ENCODE measurements at regions of chr1 and their contacts with region 1.

Region 1: GRCh38 chr1:26233903-26234643 is at the start of gene CEP85:
- DNase-seq: peak; percentile 97 to 100 (median 99)
- H3K4me3 ChIP-seq: peak within 1 kb of the TSS; percentile 60 to 100 (median 88)
- H3K27ac ChIP-seq: peak within 1 kb of the TSS; percentile 46 to 99 (median 89)
- H3K27me3 ChIP-seq: no peaks in the 10 kb centered on the region
- CTCF ChIP-seq: peak; percentile 48 to 93 (median 84)
- total RNA-seq, gene CEP85: 11.3 to 55.4 (median 22.9) TPM

Region 2: DNA sequence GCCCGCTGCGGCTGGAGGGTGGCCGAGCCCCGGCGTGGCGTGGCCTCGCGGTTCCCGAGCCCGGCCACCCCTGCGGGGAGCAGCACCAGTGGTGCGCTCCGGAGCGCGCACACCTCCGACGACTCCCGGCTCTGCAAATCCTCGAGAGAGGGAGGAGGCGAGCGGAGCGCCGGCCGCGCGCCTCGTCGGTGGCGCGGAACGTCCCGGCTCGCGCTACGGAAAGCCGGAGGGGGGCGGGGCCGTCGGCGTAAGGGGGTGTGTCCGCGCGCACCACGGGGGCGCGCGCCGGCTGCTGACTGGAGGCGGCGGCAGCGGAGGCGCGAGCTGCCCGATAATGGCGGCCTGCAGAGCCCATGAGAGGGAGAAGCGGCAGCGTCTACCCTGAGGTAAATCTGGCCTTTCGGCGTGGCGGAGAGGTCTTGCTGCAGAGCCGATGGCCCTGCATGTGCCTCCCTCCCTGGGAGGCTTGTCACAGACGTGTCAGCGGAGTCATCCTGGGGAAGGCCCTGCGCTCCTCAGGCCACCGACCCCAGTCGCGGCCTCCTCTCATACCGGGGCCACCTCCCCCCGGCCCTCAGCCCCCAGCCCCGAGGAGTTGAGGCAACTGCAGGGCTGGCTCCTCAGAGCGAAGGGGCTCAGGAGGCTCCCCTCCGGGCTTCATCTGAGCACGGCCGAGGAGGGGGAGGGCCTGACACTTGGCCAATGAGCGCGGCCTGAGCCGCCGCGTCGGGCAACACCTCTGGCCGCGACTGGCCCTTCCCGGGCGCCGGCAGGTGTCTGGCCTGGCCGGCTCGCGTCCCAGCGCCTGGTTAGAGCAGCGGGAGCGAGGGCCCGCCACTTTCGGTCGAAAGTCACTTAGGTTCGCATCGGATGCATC is 122.3 kb before region 1 on chr1 and contains the start of gene PDIK1L:
- intact Hi-C with region 1: loop called (anchors 5 kb)
- DNase-seq: peak; percentile 78 to 94 (median 88)
- H3K4me3 ChIP-seq: peak within 1 kb of the TSS; percentile 68 to 100 (median 98)
- H3K27ac ChIP-seq: peak within 1 kb of the TSS; percentile 89 to 99 (median 97)
- H3K27me3 ChIP-seq: no peaks in the 10 kb centered on the region
- CTCF ChIP-seq: peak in 20 of 56 donors; percentile 8 to 51 (median 30)
- total RNA-seq, gene PDIK1L: 6.9 to 24.8 (median 16.2) TPM

Region 3: GRCh38 chr1:26169669-26170471 is 64.2 kb before region 1 on chr1 and contains the start of gene ZNF593:
- intact Hi-C with region 1: loop called (anchors 2 to 5 kb)
- DNase-seq: peak; percentile 87 to 97 (median 93)
- H3K4me3 ChIP-seq: peak within 1 kb of the TSS; percentile 50 to 99 (median 91)
- H3K27ac ChIP-seq: peak within 1 kb of the TSS in 55 of 59 donors; percentile 2 to 87 (median 65)
- H3K27me3 ChIP-seq: no peaks in the 10 kb centered on the region
- CTCF ChIP-seq: peak; percentile 77 to 99 (median 95)
- total RNA-seq, gene ZNF593: 10.6 to 30.1 (median 17.6) TPM

Region 4: DNA sequence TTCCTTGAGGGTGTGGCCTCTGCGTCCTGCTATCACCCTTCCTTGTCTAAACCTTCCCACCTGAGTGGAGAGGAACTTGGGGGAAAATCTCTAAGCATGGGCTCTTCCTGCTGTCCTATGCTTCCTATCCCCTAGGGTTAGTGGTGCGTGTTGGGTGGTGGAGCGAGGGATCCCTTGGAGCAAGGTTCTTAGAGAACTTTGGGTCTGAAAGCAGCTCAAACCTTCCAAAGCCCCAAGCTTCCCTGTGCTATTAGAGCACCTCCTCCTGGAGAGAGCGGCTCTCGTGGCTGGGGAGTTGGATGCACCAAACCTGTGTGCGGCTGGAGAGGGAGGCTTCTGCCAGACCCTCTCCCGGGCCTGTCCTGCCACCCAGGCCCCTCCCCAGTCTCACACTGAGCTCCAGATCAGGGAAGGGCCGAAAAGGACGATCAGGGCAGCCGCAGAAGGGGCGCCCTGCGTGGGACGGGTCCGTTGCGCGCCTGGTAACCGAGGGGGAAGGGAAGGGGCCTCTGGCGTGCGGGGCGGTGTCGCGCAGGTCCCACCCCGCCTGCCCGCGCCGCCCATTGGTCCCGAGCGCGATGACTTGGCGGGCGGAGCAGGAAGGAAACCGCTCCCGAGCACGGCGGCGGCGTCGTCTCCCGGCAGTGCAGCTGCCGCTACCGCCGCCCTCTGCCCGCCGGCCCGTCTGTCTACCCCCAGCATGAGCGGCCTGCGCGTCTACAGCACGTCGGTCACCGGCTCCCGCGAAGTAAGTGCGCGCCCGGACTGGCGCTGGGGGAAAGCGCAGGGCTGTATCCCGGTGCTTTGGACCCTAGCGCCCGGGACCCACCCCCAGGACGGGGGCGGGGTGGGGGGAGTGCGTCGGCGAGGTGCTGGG is 45.6 kb after region 1 on chr1 and contains the start of gene SH3BGRL3:
- intact Hi-C with region 1: loop called in 1 of 2 experiments (anchors 2 kb)
- DNase-seq: peak; percentile 69 to 93 (median 84)
- H3K4me3 ChIP-seq: peak within 1 kb of the TSS; percentile 58 to 97 (median 89)
- H3K27ac ChIP-seq: peak within 1 kb of the TSS; percentile 58 to 98 (median 93)
- H3K27me3 ChIP-seq: no peaks in the 10 kb centered on the region
- CTCF ChIP-seq: peak in 49 of 56 donors; percentile 14 to 66 (median 37)
- total RNA-seq, gene SH3BGRL3: 50.9 to 144 (median 80.6) TPM

Region 5: GRCh38 chr1:26321315-26322041 is 87.4 kb after region 1 on chr1:
- intact Hi-C with region 1: loop called in 1 of 2 experiments (anchors 5 kb)
- DNase-seq: peak; percentile 86 to 95 (median 92)
- H3K4me3 ChIP-seq: peak overlapping the region in 15 of 59 donors; percentile 3 to 44 (median 22)
- H3K27ac ChIP-seq: peak overlapping the region in 4 of 59 donors; percentile 3 to 36 (median 12)
- H3K27me3 ChIP-seq: peaks cover 0 to 4% (median 0%) of the 10 kb centered on the region in 45 donors
- CTCF ChIP-seq: peak; percentile 65 to 97 (median 90)

Region 6: DNA sequence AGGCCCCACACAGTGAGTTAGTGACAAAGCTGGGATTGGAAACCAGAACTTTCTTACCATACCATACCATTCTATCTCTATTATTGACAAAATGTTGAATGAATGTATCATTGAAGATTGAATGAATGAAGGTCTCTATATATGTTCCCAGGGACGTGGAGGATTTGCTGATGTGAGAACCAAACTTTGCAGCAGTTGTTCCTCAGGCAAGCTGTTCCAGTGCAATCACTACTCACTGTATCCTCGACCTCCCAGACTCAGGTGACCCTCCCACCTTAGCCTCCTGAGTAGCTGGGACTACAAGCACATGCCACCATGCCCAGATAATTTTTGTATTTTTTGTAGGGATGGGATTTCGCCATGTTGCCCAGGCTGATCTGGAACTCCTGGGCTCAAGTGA is 165.0 kb after region 1 on chr1:
- intact Hi-C with region 1: no loop called
- DNase-seq: no peak
- H3K4me3 ChIP-seq: no peak overlapping the region
- H3K27ac ChIP-seq: no peak overlapping the region
- H3K27me3 ChIP-seq: peaks cover 0 to 4% (median 0%) of the 10 kb centered on the region in 45 donors
- CTCF ChIP-seq: no peak

Region 7: DNA sequence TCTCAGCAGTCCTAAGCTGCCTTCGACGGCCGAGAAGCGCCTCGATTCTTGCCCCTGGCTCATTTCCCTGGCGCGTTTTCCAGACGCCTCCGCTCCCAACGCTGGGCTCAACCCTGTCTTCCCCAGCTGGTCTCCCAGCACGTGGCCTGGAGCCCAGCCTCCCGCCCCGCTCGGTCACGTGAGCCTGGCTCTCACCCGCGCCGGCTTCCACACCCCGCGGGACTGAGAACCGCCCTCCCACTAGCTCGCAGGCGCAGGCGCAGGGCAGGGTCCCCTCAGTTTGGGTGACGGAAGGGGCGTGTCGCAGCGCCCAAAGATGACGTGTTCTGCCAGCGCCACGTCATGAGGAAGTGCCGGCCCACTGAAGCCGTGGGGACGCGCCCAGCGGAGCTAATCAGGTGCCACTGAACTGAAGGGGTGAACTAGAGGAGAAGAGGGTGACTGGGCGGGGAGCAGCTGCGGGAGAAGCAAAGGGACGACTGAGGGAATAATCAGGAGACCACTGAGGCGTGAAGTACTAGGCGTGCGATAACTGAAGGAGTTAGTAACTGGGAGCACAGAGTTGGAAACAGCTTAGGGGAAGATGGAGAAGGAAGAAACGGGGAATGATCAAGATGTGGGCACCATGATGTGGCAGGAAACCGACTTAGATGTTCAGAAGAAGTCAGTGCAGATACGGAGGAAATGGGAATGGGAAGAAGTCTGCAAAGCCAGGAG is 198.1 kb after region 1 on chr1 and contains the start of gene DHDDS:
- intact Hi-C with region 1: loop called in 1 of 2 experiments (anchors 10 kb)
- DNase-seq: peak; percentile 95 to 99 (median 98)
- H3K4me3 ChIP-seq: peak within 1 kb of the TSS; percentile 54 to 98 (median 82)
- H3K27ac ChIP-seq: peak within 1 kb of the TSS in 58 of 59 donors; percentile 22 to 88 (median 78)
- H3K27me3 ChIP-seq: no peaks in the 10 kb centered on the region
- CTCF ChIP-seq: peak in 31 of 56 donors; percentile 6 to 65 (median 34)
- total RNA-seq, gene DHDDS: 32.0 to 72.7 (median 50.8) TPM

Measured in dorsolateral prefrontal cortex (tissue), 120 donors.